ENCODE measurements at regions of chr15 and their contacts with region 1.

Region 1: GRCh38 chr15:88664151-88664778 is 25.4 kb downstream of the ISG20 start:
- DNase-seq: peak; percentile 83
- H3K4me3 Mint-ChIP-seq: no peak overlapping the region
- H3K27ac Mint-ChIP-seq: peak overlapping the region; percentile 26
- H3K4me1 Mint-ChIP-seq: peaks cover 4% of the 10 kb centered on the region
- H3K27me3 Mint-ChIP-seq: peaks cover 8% of the 10 kb centered on the region

Region 2: GRCh38 chr15:88476635-88477060 is 187.6 kb before region 1 on chr15:
- intact Hi-C with region 1: loop called (anchors 1 kb)
- DNase-seq: peak; percentile 70
- H3K4me3 Mint-ChIP-seq: no peak overlapping the region
- H3K27ac Mint-ChIP-seq: no peak overlapping the region
- H3K4me1 Mint-ChIP-seq: peaks cover 7% of the 10 kb centered on the region
- H3K27me3 Mint-ChIP-seq: no peaks in the 10 kb centered on the region

Measured in activated CD4-positive, alpha-beta T cell treated with anti-CD3 and anti-CD28 coated beads, Interleukin-2, amount 10 ng/mL, durations not matched to agents 24 days and 14 days (primary cell).